Dendritic cell treated with granulocyte-macrophage colony-stimulating factor and Interleukin-4, amounts not matched to agents 40 ng/mL and 50 ng/mL, for 4 days (primary cell): ENCODE measurements at regions of chr10 and their contacts with region 1.

Region 1: GRCh38 chr10:71285180-71285545 is 33.9 kb upstream of the SLC29A3 start:
- H3K4me3 Mint-ChIP-seq: no peak overlapping the region
- H3K27ac Mint-ChIP-seq: no peak overlapping the region
- H3K4me1 Mint-ChIP-seq: peaks cover 15% of the 10 kb centered on the region
- H3K27me3 Mint-ChIP-seq: peaks cover 13% of the 10 kb centered on the region

Region 2: GRCh38 chr10:70925377-70926225 is 359.6 kb before region 1 on chr10:
- intact Hi-C with region 1: loop called (anchors 2 kb)
- H3K4me3 Mint-ChIP-seq: no peak overlapping the region
- H3K27ac Mint-ChIP-seq: peak overlapping the region; percentile 13
- H3K4me1 Mint-ChIP-seq: peaks cover 15% of the 10 kb centered on the region
- H3K27me3 Mint-ChIP-seq: peaks cover 10% of the 10 kb centered on the region